Activated T-helper 1 cell treated with anti-CD3 and anti-CD28 coated beads, Interleukin-12 subunit alpha, Interleukin-12 subunit beta, Interleukin-2, Interleukin-4 antibody, amounts not matched to agents 30 ng/mL and 10 ng/mL and 1 ng/mL, durations not matched to agents 14 hours and 24 hours and 36 hours (primary cell): ENCODE measurements at regions of chr21 and their contacts with region 1.

Region 1: GRCh38 chr21:32569261-32570230 is 15.8 kb downstream of the TCP10L start:
- DNase-seq: peak; percentile 67
- H3K4me3 Mint-ChIP-seq: peak overlapping the region; percentile 88
- H3K27ac Mint-ChIP-seq: peak overlapping the region; percentile 57
- H3K4me1 Mint-ChIP-seq: peaks cover 21% of the 10 kb centered on the region
- H3K27me3 Mint-ChIP-seq: peaks cover 12% of the 10 kb centered on the region

Region 2: GRCh38 chr21:32392880-32393676 is 176.5 kb before region 1 on chr21 and contains the start of gene URB1:
- intact Hi-C with region 1: loop called (anchors 1 kb)
- DNase-seq: peak; percentile 89
- H3K4me3 Mint-ChIP-seq: peak within 1 kb of the TSS; percentile 91
- H3K27ac Mint-ChIP-seq: peak within 1 kb of the TSS; percentile 88
- H3K4me1 Mint-ChIP-seq: peaks cover 48% of the 10 kb centered on the region
- H3K27me3 Mint-ChIP-seq: peaks cover 3% of the 10 kb centered on the region
- total RNA-seq, gene URB1: 42.1 and 42.8 TPM in 2 replicates

Region 3: GRCh38 chr21:32403201-32403777 is 166.3 kb before region 1 on chr21:
- intact Hi-C with region 1: loop called (anchors 1 kb)
- DNase-seq: peak; percentile 25
- H3K4me3 Mint-ChIP-seq: no peak overlapping the region
- H3K27ac Mint-ChIP-seq: no peak overlapping the region
- H3K4me1 Mint-ChIP-seq: peaks cover 10% of the 10 kb centered on the region
- H3K27me3 Mint-ChIP-seq: peaks cover 15% of the 10 kb centered on the region

Region 4: DNA sequence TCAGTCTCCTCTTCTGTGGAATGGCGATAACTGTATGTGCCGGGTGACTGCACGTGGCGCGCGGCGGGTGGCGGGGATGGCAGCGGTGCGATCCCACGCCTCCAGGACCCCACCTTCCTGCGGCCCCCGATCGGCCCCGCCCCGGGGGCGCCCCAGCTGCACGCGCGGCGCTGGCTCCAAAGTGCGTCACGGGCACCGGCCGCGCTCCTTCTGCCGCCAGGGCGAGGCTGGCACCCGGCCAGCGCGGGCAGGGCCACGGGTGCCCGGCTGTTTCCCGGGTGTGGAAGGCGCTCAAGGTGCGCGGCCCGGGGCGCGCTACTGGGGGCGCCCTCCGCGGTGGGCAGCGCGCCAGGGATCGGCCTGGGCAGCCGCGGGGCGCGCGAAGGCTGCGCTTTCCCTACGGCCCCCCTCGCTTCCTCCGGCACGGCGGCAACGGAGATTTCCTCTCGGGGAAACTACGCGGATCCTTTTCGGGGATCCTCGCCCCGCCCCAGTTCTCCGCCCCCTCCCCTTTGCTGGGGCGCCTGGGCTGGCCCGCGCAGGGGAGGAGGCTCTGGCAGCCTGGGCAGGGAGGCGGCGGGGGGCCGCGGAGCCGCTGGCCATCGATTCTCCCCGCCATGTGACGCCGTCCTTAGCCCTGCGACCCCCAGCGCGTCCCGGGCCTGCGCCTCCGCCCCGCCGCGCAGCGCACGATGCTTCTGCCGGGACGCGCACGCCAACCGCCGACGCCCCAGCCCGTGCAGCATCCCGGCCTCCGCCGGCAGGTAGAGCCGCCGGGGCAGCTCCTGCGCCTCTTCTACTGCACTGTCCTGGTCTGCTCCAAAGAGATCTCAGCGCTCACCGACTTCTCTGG is 157.2 kb before region 1 on chr21 and contains the start of gene EVA1C:
- intact Hi-C with region 1: loop called (anchors 1 kb)
- DNase-seq: peak; percentile 39
- H3K4me3 Mint-ChIP-seq: peak within 1 kb of the TSS; percentile 94
- H3K27ac Mint-ChIP-seq: peak within 1 kb of the TSS; percentile 87
- H3K4me1 Mint-ChIP-seq: peaks cover 33% of the 10 kb centered on the region
- H3K27me3 Mint-ChIP-seq: peaks cover 12% of the 10 kb centered on the region
- total RNA-seq, gene EVA1C: 6.2 and 7.6 TPM in 2 replicates

Region 5: DNA sequence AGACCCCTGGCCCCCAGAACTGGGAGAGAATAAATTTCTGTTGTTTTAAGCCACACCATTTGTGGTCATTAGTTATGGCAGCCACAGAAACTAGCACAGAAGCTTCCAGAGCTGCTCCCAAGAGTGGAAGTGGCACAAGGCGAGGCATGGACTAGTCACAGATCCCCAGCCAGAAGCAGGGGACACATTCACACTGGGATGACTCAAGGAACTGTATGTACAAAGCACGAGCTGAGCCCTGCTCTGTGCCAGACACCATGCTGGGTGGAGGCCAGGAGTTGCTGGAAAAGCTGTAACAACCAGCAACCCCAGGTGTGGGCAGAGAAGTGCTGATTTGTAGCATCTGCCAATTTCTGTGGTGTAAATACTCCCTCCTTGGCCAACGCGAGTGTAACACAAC is 39.9 kb before region 1 on chr21:
- intact Hi-C with region 1: no loop called
- DNase-seq: no peak
- H3K4me3 Mint-ChIP-seq: no peak overlapping the region
- H3K27ac Mint-ChIP-seq: no peak overlapping the region
- H3K4me1 Mint-ChIP-seq: no peaks in the 10 kb centered on the region
- H3K27me3 Mint-ChIP-seq: no peaks in the 10 kb centered on the region